ENCODE measurements at regions of chr6 and their contacts with region 1.

Region 1: GRCh38 chr6:71012866-71013469 is 56.1 kb upstream of the B3GAT2 start:
- DNase-seq: no peak
- ATAC-seq: peak; percentile 75
- H3K4me3 Mint-ChIP-seq: no peak overlapping the region
- H3K27ac Mint-ChIP-seq: no peak overlapping the region
- H3K4me1 Mint-ChIP-seq: peaks cover 2% of the 10 kb centered on the region
- H3K27me3 Mint-ChIP-seq: peaks cover 11% of the 10 kb centered on the region
- CTCF ChIP-seq: peak; percentile 72

Region 2: DNA sequence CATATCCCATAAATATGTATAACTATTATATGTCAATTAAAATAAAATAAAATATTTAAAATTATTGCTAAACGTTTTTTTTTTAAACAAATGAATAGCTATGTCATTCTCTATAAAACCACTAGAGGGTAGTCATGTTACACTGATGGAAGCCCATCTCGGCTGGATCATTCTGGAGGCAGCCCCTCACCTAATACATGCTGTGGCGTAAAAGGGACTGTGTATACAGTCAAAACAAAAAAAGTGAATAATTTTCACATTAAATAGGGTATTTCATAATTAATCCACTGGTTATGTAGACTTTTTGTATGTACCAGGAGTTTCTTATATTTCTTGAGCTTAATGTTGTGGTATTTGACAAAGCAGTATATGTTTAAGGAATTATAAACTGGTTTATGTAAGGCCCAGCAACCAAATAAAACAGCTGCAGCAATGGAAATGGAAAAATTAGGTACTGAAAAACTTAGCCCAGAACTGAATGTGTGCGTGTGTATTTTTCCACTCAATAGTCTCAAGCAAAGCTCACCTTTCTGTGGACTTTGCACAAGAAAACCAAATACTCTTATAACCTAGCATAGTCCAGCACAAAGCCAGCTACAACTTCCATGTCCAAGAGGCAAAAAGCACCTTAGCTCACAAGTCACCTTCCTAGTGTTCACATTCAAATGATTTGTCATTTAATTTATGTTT is 791.8 kb before region 1 on chr6:
- CTCF ChIA-PET with region 1: interaction called, 4 read pairs
- POLR2A ChIA-PET with region 1: no interaction called
- intact Hi-C with region 1: loop called (anchors 1 kb)
- DNase-seq: no peak
- ATAC-seq: peak; percentile 68
- H3K4me3 Mint-ChIP-seq: no peak overlapping the region
- H3K27ac Mint-ChIP-seq: no peak overlapping the region
- H3K4me1 Mint-ChIP-seq: peaks cover 6% of the 10 kb centered on the region
- H3K27me3 Mint-ChIP-seq: peaks cover 3% of the 10 kb centered on the region
- CTCF ChIP-seq: no peak

Region 3: GRCh38 chr6:70369332-70369950 is 643.5 kb before region 1 on chr6:
- CTCF ChIA-PET with region 1: interaction called, 4 read pairs
- POLR2A ChIA-PET with region 1: no interaction called
- intact Hi-C with region 1: loop called (anchors 1 kb)
- DNase-seq: peak; percentile 27
- ATAC-seq: peak; percentile 92
- H3K4me3 Mint-ChIP-seq: no peak overlapping the region
- H3K27ac Mint-ChIP-seq: no peak overlapping the region
- H3K4me1 Mint-ChIP-seq: no peaks in the 10 kb centered on the region
- H3K27me3 Mint-ChIP-seq: peaks cover 21% of the 10 kb centered on the region
- CTCF ChIP-seq: peak; percentile 73

Region 4: DNA sequence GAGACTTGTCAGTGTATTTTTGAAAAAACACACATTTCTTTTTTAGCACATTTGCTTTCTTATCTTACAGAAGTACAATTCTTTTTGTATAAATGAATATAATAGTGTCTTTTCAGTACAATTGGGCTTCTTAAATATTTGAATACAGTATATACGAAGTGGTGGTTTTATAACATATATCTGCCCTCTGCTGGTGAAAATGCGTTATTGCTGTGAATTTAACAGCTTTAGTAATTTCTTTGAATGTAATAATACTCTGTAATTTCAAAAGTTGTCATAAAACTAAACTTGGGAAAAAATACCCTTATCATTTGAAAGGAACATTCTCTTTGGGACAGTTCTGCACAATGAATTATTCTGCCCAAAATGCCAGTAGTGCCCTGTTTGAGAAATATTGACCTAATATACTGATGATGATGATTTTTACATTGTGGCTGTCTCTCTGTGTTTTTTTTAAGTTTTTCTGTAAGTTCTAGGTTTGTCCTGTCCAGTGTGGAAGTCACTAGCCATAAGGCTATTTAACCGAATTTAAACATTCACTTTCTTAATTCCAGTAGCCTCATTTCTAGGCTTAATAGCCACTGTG is 326.3 kb before region 1 on chr6:
- CTCF ChIA-PET with region 1: no interaction called
- POLR2A ChIA-PET with region 1: no interaction called
- intact Hi-C with region 1: loop called (anchors 5 kb)
- DNase-seq: no peak
- ATAC-seq: peak; percentile 52
- H3K4me3 Mint-ChIP-seq: no peak overlapping the region
- H3K27ac Mint-ChIP-seq: no peak overlapping the region
- H3K4me1 Mint-ChIP-seq: peaks cover 23% of the 10 kb centered on the region
- H3K27me3 Mint-ChIP-seq: no peaks in the 10 kb centered on the region
- CTCF ChIP-seq: peak; percentile 65

Region 5: GRCh38 chr6:70738028-70738427 is 274.9 kb before region 1 on chr6:
- CTCF ChIA-PET with region 1: no interaction called
- POLR2A ChIA-PET with region 1: no interaction called
- intact Hi-C with region 1: no loop called
- DNase-seq: no peak
- ATAC-seq: no peak
- H3K4me3 Mint-ChIP-seq: no peak overlapping the region
- H3K27ac Mint-ChIP-seq: no peak overlapping the region
- H3K4me1 Mint-ChIP-seq: peaks cover 7% of the 10 kb centered on the region
- H3K27me3 Mint-ChIP-seq: no peaks in the 10 kb centered on the region
- CTCF ChIP-seq: no peak

Region 6: GRCh38 chr6:70884074-70884983 is 128.6 kb before region 1 on chr6:
- CTCF ChIA-PET with region 1: no interaction called
- POLR2A ChIA-PET with region 1: no interaction called
- intact Hi-C with region 1: loop called (anchors 1 kb)
- DNase-seq: no peak
- ATAC-seq: peak; percentile 85
- H3K4me3 Mint-ChIP-seq: no peak overlapping the region
- H3K27ac Mint-ChIP-seq: no peak overlapping the region
- H3K4me1 Mint-ChIP-seq: no peaks in the 10 kb centered on the region
- H3K27me3 Mint-ChIP-seq: peaks cover 12% of the 10 kb centered on the region
- CTCF ChIP-seq: peak; percentile 78

Measured in activated B cell treated with CpG ODN at 0.5 μM for 24 hours (primary cell).